Uterus (tissue), 4 donors: ENCODE measurements at regions of chr14 and their contacts with region 1.

Region 1: DNA sequence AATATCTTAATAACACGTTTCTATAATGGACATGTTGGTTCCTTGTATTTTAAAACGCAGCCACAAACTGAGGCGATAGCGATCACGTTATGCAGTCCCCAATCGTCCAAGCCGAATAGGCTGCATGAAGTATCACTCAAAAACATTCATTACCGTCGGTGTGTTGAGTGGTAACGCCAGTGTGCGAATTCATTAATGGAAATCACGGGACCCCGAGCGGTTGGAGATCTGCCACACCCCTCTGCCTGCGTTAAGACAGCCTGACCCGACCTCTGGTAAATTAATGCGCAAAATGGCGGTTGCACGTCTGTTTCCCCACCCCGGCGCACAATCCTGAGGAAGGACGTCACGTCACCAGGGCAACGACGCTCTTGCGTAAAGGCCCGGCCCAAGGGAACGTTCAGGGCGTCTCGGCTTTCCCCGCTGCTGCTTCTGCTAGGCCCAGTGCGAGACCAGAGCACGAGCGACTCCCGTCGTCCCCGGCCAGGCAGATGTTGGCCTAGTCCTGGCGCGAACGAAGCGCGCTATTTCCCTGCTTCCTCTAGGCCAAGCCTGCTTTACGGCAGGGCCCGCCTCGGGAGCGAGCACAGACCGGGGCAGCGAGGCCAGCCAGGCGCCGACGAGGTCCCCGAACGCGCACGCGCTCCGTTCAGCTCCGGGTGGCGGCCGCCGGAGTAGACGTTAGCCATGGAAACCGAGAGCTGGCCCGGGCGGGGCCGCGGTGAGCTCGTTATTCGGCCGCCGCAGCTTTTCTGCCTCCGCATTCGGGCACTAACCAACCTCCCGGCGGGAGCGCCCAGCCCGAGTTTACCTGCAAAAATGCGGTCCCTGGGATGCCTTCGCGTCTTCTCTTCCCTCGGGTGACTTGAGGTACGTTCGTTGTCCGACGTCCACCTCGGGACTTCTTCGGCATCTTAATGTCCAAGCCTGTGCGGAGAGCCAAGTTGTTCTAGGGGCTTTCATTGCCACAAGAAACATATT is at the start of gene PCNX4:
- DNase-seq: peak; percentile 96 to 98
- H3K4me3 ChIP-seq: peak within 1 kb of the TSS; percentile 52 to 89
- H3K27ac ChIP-seq: peak within 1 kb of the TSS; percentile 93 to 98
- H3K4me1 ChIP-seq: no peaks in the 10 kb centered on the region
- H3K27me3 ChIP-seq: no peaks in the 10 kb centered on the region
- CTCF ChIP-seq: peak in 1 of 4 experiments; percentile 8
- POLR2A ChIP-seq: peak; percentile 92 to 94
- total RNA-seq, gene PCNX4: 30.9 to 163 (median 97.7) TPM

Region 2: GRCh38 chr14:60164712-60165546 is 73.1 kb after region 1 on chr14 and contains the start of gene DHRS7:
- intact Hi-C with region 1: loop called (anchors 10 kb)
- DNase-seq: peak; percentile 70 to 80
- H3K4me3 ChIP-seq: peak within 1 kb of the TSS; percentile 59 to 73
- H3K27ac ChIP-seq: peak within 1 kb of the TSS; percentile 87 to 95
- H3K4me1 ChIP-seq: no peaks in the 10 kb centered on the region
- H3K27me3 ChIP-seq: no peaks in the 10 kb centered on the region
- CTCF ChIP-seq: peak; percentile 42 to 62 (median 53)
- POLR2A ChIP-seq: peak; percentile 52 to 70
- total RNA-seq, gene DHRS7: 64.5 to 108 (median 91.2) TPM

Region 3: DNA sequence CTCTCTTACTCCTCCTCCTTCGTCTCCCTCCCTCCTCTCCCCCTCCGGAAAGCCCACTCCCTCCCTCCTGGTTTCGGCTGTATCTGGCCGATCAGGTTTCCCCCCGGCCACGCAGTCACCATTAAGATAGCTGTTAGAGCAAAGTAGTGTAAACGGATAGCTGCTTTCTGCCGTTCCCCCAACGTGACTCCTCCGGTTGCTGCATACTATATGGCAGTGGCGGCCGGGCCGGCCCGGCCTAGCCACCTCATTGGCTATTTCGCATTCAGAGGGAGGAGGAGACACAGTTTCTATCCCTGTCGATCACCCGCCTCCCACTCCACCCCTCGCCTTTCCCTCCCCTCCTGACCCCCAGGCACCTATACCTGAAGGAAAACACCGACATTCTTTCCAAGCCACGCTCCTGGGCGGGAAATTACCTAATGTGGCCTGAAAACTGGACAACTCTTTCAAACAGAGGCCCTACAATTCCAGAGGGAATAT is 632.3 kb after region 1 on chr14 and contains the start of gene SIX4:
- intact Hi-C with region 1: no loop called
- DNase-seq: peak; percentile 68 to 72
- H3K4me3 ChIP-seq: peak within 1 kb of the TSS; percentile 60 to 64
- H3K27ac ChIP-seq: peak within 1 kb of the TSS; percentile 72 to 80
- H3K4me1 ChIP-seq: no peaks in the 10 kb centered on the region
- H3K27me3 ChIP-seq: no peaks in the 10 kb centered on the region
- CTCF ChIP-seq: no peak
- POLR2A ChIP-seq: peak; percentile 28 to 45
- total RNA-seq, gene SIX4: 0.26 to 9.7 (median 3.5) TPM